ENCODE measurements at regions of chr17 and their contacts with region 1.

Region 1: DNA sequence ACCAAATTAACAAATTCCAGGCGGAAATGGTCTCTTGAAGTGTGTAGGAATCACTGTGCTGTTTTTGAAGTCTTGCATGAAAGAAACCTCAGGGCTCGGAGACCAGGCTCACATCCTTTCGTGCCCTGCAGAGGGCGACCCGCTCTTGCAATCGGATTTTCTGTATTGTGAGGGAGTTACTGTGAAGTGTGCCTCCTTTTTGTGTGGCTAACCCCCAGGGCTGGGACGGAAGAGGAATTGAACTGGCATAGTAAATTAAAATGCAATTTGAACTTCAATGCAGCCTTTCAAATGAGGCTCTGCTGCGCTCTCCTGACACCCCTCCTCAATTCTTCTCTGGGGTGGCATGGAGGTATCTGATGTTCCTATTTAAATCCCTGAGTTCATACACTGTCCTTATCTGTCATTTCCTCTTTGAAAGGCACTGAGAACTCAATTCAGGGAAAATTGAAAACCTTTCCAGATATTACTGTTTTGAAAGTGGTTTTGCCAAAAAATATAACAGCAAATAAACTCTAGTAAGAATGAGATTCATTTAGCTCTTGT is 51.5 kb upstream of the MGAT5B start:
- DNase-seq: peak; percentile 56
- H3K4me3 Mint-ChIP-seq: no peak overlapping the region
- H3K27ac Mint-ChIP-seq: no peak overlapping the region
- H3K4me1 Mint-ChIP-seq: no peaks in the 10 kb centered on the region
- H3K27me3 Mint-ChIP-seq: peaks cover 81% of the 10 kb centered on the region
- CTCF ChIP-seq: peak; percentile 46

Region 2: GRCh38 chr17:76830987-76831715 is 14.5 kb after region 1 on chr17:
- CTCF ChIA-PET with region 1: no interaction called
- intact Hi-C with region 1: no loop called
- DNase-seq: no peak
- H3K4me3 Mint-ChIP-seq: no peak overlapping the region
- H3K27ac Mint-ChIP-seq: no peak overlapping the region
- H3K4me1 Mint-ChIP-seq: no peaks in the 10 kb centered on the region
- H3K27me3 Mint-ChIP-seq: peaks cover 97% of the 10 kb centered on the region
- CTCF ChIP-seq: no peak

Region 3: GRCh38 chr17:76852843-76853242 is 36.2 kb after region 1 on chr17:
- CTCF ChIA-PET with region 1: no interaction called
- intact Hi-C with region 1: no loop called
- DNase-seq: no peak
- H3K4me3 Mint-ChIP-seq: no peak overlapping the region
- H3K27ac Mint-ChIP-seq: no peak overlapping the region
- H3K4me1 Mint-ChIP-seq: no peaks in the 10 kb centered on the region
- H3K27me3 Mint-ChIP-seq: peaks cover 91% of the 10 kb centered on the region
- CTCF ChIP-seq: no peak

Region 4: GRCh38 chr17:76909971-76910760 is 93.5 kb after region 1 on chr17:
- CTCF ChIA-PET with region 1: no interaction called
- intact Hi-C with region 1: no loop called
- DNase-seq: peak; percentile 74
- H3K4me3 Mint-ChIP-seq: no peak overlapping the region
- H3K27ac Mint-ChIP-seq: no peak overlapping the region
- H3K4me1 Mint-ChIP-seq: no peaks in the 10 kb centered on the region
- H3K27me3 Mint-ChIP-seq: peaks cover 91% of the 10 kb centered on the region
- CTCF ChIP-seq: no peak

Region 5: DNA sequence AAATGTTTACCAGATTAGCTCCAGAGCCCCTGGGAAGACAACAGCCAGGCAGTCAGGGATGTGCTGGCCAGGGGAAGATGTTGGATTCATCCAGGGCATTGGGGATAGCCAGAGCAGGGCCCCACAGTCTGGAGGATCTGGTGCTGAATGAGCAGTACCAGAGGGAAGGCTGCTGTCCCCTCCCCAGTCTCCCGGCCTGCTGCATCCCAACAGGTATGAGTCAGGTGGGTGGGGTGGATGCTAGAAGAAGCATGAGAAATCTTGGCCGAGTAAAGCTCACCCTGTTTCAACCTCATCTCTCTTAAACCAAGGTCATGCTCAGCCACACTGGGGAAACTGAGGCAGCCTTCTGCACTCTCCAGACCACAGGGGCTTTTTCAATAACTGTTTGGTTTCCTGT is 252.3 kb after region 1 on chr17:
- CTCF ChIA-PET with region 1: no interaction called
- intact Hi-C with region 1: loop called (anchors 2 kb)
- DNase-seq: peak; percentile 35
- H3K4me3 Mint-ChIP-seq: no peak overlapping the region
- H3K27ac Mint-ChIP-seq: no peak overlapping the region
- H3K4me1 Mint-ChIP-seq: no peaks in the 10 kb centered on the region
- H3K27me3 Mint-ChIP-seq: peaks cover 72% of the 10 kb centered on the region
- CTCF ChIP-seq: no peak